ENCODE measurements at regions of chr19 and their contacts with region 1.

Region 1: DNA sequence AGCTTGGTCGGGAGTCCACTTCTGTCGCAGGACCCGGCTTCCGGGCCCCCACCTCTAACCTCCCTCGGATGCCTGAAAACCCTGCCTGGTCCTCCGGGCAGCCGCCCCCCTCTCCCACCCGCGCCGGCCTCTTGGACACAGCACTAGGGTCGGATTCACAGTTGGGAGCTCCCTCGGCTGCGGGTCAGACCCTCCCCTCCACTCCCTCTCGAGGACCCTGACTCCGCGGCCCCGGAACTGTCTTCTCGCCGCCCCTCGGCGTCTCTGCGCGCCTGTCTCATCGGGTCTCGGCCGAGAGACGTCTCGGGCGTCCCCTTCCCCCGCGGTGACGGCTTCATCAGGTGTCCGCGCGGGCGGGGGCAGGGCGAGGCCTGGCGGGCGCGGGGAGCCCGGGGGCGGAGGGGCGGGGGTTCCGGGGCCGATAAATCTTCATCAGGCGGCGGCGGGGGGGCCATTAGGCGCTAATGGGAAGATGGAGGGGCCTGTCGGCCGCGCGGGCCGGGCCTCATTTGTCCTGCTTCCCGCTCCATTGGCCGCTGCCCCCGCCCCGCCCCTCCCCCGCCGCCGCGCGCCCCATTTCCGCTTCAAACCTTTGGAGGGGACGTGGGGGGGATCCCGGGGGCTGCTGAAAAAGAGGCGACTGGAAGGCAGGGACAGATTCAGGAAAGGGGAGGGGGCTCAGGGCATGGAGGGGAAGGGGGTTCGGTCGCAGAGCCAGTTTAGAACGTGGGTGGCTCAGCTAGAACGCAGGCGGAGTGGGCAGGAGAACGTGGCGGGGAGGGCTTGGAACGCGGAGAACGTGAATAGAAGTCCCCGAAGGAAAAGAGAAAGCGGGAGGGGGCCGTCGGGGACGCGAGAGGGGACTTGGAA is 11.8 kb upstream of the ERFL start:
- DNase-seq: no peak
- H3K4me3 ChIP-seq: peak overlapping the region; percentile 70
- H3K27me3 ChIP-seq: peaks cover 4% of the 10 kb centered on the region
- CTCF ChIP-seq: no peak

Region 2: DNA sequence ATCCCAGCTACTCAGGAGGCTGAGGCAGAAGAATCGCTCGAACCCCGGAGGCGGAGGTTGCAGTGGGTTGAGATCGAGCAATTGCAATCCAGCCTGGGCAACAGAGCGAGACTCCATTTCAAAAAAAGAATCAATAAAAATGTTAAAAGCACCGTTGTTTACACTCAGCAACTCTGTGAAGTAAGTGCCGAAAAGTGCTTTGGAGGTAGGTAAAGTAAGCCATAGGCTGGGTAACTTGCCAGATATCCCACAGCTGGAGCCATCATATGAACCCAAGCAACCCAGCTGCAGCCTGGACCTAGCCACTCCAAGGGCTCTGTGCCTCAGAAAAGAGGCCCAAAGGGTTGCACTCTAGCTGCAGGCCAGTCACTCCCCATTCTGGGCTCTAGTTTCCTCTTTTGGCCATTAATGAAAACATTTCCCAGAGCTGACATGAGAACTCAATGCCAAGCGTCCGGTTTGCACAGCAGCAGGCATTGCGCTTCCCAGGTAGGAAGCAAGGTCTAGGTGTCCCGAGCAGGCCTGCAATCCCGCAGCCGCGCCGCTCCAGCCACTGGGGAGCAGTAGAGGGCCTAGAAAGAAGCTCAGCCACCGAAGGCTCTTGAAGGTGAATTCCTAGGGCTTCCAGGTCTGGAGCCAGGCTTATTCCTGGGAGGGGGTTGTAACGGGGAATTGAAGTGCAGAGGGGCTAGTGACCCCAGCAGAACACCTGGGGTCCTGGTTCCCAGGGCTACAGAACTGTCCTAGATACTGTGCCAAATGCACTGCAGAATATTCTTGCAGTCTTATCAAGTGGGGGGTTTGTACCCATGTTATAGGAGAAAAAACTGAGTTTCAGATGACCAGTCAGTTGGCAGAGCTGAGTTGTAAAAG is 67.1 kb before region 1 on chr19:
- CTCF ChIA-PET with region 1: interaction called, 11 read pairs
- POLR2A ChIA-PET with region 1: interaction called, 3 read pairs
- DNase-seq: no peak
- H3K4me3 ChIP-seq: no peak overlapping the region
- H3K27me3 ChIP-seq: no peaks in the 10 kb centered on the region
- CTCF ChIP-seq: peak; percentile 76

Region 3: DNA sequence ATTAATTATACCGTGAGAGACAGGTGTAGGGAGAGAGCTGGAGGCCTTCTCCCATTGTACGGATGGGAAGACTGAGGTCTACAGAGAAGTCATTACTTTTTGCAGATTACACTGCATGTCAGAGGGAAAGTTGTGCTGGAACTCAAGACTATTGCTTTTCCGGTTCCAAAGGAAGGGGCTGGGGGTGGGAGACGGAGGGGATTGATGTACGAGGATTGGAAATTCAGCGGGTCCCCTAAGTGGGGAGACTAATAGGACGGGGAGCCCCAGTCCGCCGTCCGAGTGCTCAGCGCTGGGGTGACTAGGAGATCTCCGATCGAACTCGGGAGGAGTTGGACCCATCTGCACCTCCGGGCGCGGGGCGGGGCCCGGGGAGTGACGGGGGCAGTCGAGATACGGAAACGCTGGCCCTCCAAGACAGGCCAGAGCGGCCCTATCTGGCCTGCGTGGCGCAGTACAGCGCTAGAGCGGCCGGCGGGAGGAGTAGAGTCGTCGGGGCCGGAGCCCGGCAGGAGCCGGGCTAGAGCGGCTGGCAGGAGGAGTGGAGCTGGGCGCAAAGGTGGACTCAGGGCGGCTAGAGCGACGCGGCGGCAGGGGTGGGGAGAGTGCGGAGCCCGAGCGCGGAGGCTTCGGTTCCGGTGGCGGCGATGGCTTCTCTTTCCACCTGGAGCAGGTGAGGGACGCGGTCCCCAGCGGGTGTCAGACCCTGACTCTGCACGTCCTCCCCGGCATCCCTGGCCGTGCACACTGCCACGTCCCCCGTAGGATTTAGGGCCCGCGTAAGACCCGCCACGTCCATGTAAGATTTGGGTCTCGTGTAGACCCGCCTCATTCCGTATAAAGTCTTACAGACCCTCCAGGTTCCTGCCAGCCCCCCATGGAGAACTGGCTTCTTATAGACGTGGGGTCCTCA is 56.0 kb before region 1 on chr19:
- CTCF ChIA-PET with region 1: no interaction called
- POLR2A ChIA-PET with region 1: no interaction called
- DNase-seq: peak; percentile 73
- H3K4me3 ChIP-seq: peak overlapping the region; percentile 99
- H3K27me3 ChIP-seq: no peaks in the 10 kb centered on the region
- CTCF ChIP-seq: peak; percentile 32; the same call in 1 of the 2 replicates

Region 4: DNA sequence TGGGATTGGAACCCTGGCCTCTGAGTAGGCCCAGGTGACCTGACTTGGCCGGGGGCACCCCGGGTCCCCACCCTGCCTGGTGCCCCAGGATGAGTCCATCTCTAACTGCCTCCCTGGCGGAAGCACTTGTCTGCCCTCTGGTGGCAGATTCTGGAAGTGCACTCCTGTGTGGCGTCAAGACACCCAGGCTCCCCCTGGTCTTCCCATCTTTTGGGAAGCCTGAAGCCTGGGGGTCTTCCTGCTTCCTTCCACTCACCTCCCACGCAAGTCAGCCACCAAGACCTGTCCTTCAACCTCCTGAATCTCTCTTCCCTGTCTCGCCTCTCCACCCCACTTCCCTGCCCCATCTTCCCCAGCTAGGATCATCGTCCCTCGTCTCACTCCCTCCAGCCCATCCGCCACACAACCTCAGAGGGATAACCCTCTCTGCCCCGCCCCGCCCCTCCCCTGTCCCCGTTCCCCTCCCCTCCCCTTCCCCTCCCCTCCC is 11.6 kb after region 1 on chr19:
- CTCF ChIA-PET with region 1: interaction called, 18 read pairs
- POLR2A ChIA-PET with region 1: no interaction called
- DNase-seq: no peak
- H3K4me3 ChIP-seq: no peak overlapping the region
- H3K27me3 ChIP-seq: no peaks in the 10 kb centered on the region
- CTCF ChIP-seq: peak; percentile 99

Region 5: GRCh38 chr19:41959056-41960053 is 19.3 kb after region 1 on chr19 and contains the start of gene RABAC1:
- CTCF ChIA-PET with region 1: interaction called, 18 read pairs
- POLR2A ChIA-PET with region 1: no interaction called
- DNase-seq: peak; percentile 52
- H3K4me3 ChIP-seq: peak within 1 kb of the TSS; percentile 100
- H3K27me3 ChIP-seq: no peaks in the 10 kb centered on the region
- CTCF ChIP-seq: peak; percentile 36
- polyA plus RNA-seq, gene RABAC1: 302 and 361 TPM in 2 replicates